ENCODE measurements at regions of chr3 and their contacts with region 1.

Region 1: DNA sequence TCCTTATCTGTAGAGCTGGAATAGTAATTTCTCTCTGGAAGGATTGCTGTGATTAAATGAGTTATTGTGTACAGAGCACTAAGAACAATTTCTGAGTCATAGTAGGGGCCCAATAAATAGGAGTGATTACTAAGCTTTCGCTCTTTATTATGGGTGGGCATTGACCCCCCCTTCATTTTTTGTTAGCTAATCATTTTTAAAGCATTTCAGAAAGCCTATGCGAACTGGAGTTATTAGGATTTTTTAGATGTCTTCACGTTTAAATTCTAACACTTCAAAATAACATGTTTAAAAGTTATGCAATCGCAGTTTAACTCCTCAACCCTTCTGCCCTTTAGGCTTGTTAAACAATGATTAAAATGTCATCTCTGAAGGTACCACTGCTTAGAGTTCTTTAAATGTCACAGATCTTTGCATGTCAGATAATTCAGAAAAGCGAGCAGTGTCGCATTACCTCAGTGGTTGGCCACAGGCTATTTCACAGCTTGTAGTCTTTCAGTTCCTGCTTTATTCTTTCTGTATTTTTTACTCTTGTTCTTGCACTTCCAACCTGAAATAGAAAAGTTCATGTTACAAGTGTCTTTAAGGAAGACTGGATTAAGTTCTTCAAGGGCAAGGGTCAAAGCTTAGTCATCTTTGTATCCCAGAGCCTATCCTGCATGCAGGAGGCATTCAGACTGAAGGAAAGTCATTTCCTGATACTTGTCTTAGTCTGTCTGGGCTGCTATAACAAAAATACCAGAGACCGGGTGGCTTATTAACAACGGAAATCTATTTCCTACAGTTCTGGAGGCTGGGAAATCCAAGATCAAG is 102.9 kb downstream of the FNDC3B start:
- DNase-seq: peak in 1 of 2 experiments; percentile 91
- H3K4me3 ChIP-seq: peak overlapping the region; percentile 27; the same call in 1 of the 2 replicates
- H3K27ac ChIP-seq: peak overlapping the region; percentile 86
- H3K4me1 ChIP-seq: peaks cover 67% of the 10 kb centered on the region
- H3K27me3 ChIP-seq: no peaks in the 10 kb centered on the region
- CTCF ChIP-seq: no peak

Region 2: GRCh38 chr3:171825222-171825828 is 316.9 kb before region 1 on chr3:
- CTCF ChIA-PET with region 1: no interaction called
- POLR2A ChIA-PET with region 1: no interaction called
- intact Hi-C with region 1: no loop called
- DNase-seq: peak in 1 of 2 experiments; percentile 84
- H3K4me3 ChIP-seq: peak overlapping the region; percentile 28; the same call in 1 of the 2 replicates
- H3K27ac ChIP-seq: peak overlapping the region; percentile 75
- H3K4me1 ChIP-seq: peaks cover 29% of the 10 kb centered on the region
- H3K27me3 ChIP-seq: no peaks in the 10 kb centered on the region
- CTCF ChIP-seq: no peak

Region 3: DNA sequence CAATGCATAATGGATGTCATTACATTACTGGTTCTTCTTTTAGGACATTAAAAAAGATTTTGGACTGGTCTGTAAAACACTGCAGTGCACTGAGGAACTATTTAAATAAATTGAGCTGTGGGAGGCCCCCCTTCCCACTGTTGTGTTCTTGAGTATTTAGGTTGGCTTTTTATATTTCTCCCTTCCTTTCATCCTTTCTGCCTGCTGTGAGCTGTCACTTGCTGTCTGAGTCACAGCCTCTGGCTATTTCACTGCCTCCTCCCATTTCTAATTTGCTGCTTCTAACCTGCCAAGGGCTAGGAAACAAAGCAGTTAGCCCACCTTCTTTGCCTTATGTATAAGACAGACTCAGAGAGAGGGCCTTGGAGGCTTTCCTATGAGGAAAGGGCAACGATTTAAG is 191.9 kb before region 1 on chr3:
- CTCF ChIA-PET with region 1: no interaction called
- POLR2A ChIA-PET with region 1: no interaction called
- intact Hi-C with region 1: loop called (anchors 5 kb)
- DNase-seq: peak; percentile 21 to 65
- H3K4me3 ChIP-seq: no peak overlapping the region
- H3K27ac ChIP-seq: peak overlapping the region; percentile 19
- H3K4me1 ChIP-seq: peaks cover 56% of the 10 kb centered on the region
- H3K27me3 ChIP-seq: no peaks in the 10 kb centered on the region
- CTCF ChIP-seq: no peak

Region 4: GRCh38 chr3:171980578-171981270 is 161.5 kb before region 1 on chr3:
- CTCF ChIA-PET with region 1: no interaction called
- POLR2A ChIA-PET with region 1: no interaction called
- intact Hi-C with region 1: no loop called
- DNase-seq: no peak
- H3K4me3 ChIP-seq: no peak overlapping the region
- H3K27ac ChIP-seq: no peak overlapping the region
- H3K4me1 ChIP-seq: peaks cover 16% of the 10 kb centered on the region
- H3K27me3 ChIP-seq: no peaks in the 10 kb centered on the region
- CTCF ChIP-seq: no peak

Region 5: DNA sequence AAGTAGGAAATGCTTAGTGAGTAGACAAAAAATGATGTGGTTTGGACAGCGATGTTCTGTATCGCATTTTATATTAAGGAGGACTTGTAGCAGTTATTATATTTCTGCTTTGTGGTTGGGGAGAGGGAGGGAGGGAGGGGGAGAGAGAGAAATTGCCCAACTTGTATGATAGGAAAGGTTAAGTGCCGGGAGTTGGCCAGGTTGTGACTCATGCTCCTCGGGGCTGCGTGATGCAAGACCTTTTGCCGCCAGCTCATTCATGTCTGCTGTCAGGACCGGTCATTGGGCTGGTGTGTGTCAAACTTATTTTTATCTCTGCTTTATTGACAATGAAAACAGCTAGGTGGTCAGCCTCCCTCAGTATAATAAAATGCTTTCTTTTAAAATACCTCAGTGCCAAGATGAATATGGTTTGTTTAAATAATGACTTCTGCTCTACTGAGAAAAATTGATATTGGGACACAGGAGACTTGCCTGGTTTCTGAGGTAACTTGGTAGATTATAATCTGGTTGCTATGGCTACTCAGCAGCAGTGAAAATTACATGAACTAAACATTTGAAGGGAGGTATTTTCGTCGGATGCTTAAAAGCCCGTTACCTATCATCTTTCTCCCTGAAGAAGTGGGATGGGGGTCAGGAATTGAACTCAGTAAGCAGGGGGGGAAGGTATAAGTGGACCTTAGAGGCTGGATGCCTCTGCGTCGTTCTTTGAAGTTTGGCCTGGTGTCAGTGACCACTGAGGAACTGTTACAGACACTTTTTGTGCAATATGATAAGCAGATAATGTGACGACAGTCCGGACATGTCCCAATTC is 12.2 kb before region 1 on chr3:
- CTCF ChIA-PET with region 1: no interaction called
- POLR2A ChIA-PET with region 1: interaction called, 5 read pairs
- intact Hi-C with region 1: loop called (anchors 1 kb)
- DNase-seq: peak; percentile 95 to 99
- H3K4me3 ChIP-seq: peak overlapping the region; percentile 11
- H3K27ac ChIP-seq: peak overlapping the region; percentile 78
- H3K4me1 ChIP-seq: peaks cover 97% of the 10 kb centered on the region
- H3K27me3 ChIP-seq: no peaks in the 10 kb centered on the region
- CTCF ChIP-seq: no peak

Region 6: GRCh38 chr3:172159962-172160538 is 17.8 kb after region 1 on chr3:
- CTCF ChIA-PET with region 1: no interaction called
- POLR2A ChIA-PET with region 1: no interaction called
- intact Hi-C with region 1: no loop called
- DNase-seq: no peak
- H3K4me3 ChIP-seq: no peak overlapping the region
- H3K27ac ChIP-seq: no peak overlapping the region
- H3K4me1 ChIP-seq: peaks cover 91% of the 10 kb centered on the region
- H3K27me3 ChIP-seq: no peaks in the 10 kb centered on the region
- CTCF ChIP-seq: no peak

Region 7: GRCh38 chr3:172171396-172172075 is 29.3 kb after region 1 on chr3:
- CTCF ChIA-PET with region 1: interaction called, 4 read pairs
- POLR2A ChIA-PET with region 1: interaction called, 11 read pairs
- intact Hi-C with region 1: no loop called
- DNase-seq: no peak
- H3K4me3 ChIP-seq: no peak overlapping the region
- H3K27ac ChIP-seq: peak overlapping the region; percentile 9; the same call in 1 of the 2 replicates
- H3K4me1 ChIP-seq: peaks cover 77% of the 10 kb centered on the region
- H3K27me3 ChIP-seq: no peaks in the 10 kb centered on the region
- CTCF ChIP-seq: no peak

Measured in PC-9 (cell line).